ENCODE measurements at regions of chr12 and their contacts with region 1.

Region 1: GRCh38 chr12:14514154-14514842 is 53.4 kb downstream of the PLBD1 start:
- DNase-seq: peak; percentile 66 to 93
- H3K4me3 ChIP-seq: no peak overlapping the region
- H3K27ac ChIP-seq: no peak overlapping the region
- H3K4me1 ChIP-seq: peaks cover 18% of the 10 kb centered on the region
- H3K27me3 ChIP-seq: no peaks in the 10 kb centered on the region
- CTCF ChIP-seq: peak; percentile 79

Region 2: DNA sequence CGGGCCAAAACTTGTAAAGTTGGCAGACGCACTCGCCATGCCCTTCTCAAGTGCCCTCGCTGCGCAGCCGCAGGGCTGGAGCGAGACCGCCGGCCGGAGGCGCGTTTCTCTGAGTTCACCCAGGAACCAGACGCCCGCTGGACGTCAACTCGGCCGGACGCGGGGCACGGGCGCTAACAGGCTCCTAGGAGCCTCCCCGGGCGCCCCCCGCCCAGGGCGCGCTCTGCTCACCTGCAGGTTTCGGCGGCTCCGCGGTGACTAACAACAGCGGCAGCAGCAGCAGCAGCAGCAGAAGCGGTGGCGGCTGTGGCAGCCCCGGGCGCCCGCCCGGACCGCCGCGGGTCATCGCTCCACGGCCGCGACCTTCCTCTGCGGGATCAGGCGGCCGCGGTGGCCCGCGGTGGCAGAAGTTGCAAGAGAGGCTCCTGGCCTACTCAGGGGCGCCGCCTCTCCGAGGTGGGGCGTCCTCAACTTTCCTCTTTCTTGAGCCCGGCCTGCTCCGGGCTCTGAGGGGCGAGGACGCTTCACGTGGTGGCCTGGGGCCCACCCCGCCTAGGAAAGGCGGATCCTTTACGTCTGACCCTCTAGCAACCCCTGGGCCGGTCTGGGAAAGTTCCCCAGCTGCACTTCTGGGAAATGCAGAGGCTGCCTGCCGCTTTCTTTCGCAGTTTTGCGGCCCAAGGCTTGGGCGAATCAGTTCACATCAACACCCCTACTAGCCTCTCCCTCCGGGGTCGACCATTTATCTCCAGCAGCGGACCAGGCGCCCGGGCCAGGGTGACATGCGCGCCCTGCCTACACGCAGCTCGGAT is 53.3 kb after region 1 on chr12 and contains the start of gene PLBD1:
- CTCF ChIA-PET with region 1: interaction called, 3 read pairs
- POLR2A ChIA-PET with region 1: no interaction called
- intact Hi-C with region 1: loop called (anchors 1 kb)
- DNase-seq: peak; percentile 40 to 59
- H3K4me3 ChIP-seq: peak within 1 kb of the TSS; percentile 60
- H3K27ac ChIP-seq: no peak within 1 kb of the TSS
- H3K4me1 ChIP-seq: no peaks in the 10 kb centered on the region
- H3K27me3 ChIP-seq: no peaks in the 10 kb centered on the region
- CTCF ChIP-seq: no peak
- total RNA-seq, gene PLBD1: 13.8 and 17.8 TPM in 2 replicates

Region 3: DNA sequence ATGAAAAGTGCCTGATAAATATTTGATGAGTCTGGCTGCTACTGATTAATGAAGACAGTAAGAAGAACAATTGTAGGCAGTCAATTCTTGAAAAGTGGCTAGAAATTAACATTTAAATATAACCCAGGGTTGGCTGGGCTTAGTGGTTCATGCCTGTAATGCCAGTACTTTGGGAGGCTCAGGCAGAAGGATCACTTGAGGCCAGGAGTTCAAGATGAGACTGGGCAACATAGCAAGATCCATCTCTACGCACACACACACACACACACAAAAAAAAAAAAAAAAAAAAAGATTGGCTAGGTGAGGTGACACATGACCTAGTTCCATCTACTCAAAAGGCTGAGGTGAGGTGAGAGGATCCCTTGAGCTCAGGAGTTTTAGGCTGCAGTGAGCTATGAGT is 61.3 kb after region 1 on chr12:
- CTCF ChIA-PET with region 1: interaction called, 3 read pairs
- POLR2A ChIA-PET with region 1: interaction called, 16 read pairs
- intact Hi-C with region 1: no loop called
- DNase-seq: no peak
- H3K4me3 ChIP-seq: no peak overlapping the region
- H3K27ac ChIP-seq: no peak overlapping the region
- H3K4me1 ChIP-seq: no peaks in the 10 kb centered on the region
- H3K27me3 ChIP-seq: no peaks in the 10 kb centered on the region
- CTCF ChIP-seq: no peak

Region 4: DNA sequence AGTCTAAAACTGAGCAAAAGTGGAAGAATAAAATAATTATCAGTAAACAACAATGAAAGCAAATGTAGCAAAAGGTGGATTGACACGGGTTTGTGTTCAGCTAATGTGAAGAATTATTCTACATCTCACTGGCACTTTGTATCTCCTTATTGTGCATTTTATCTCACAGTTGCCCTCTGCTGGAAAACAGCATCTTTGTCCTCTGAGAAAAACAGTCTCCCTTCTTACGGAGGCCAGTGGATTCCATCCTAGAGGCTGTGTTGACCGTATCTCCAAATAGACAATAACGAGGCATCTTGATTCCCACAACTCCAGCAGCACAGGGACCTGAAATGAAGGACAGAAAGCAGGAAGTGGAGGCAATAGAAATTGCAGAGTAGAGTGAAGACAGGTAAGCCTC is 104.7 kb after region 1 on chr12:
- CTCF ChIA-PET with region 1: interaction called, 9 read pairs
- POLR2A ChIA-PET with region 1: no interaction called
- intact Hi-C with region 1: loop called (anchors 1 kb)
- DNase-seq: no peak
- H3K4me3 ChIP-seq: no peak overlapping the region
- H3K27ac ChIP-seq: no peak overlapping the region
- H3K4me1 ChIP-seq: no peaks in the 10 kb centered on the region
- H3K27me3 ChIP-seq: no peaks in the 10 kb centered on the region
- CTCF ChIP-seq: peak; percentile 56; the same call in 1 of the 2 replicates

Region 5: GRCh38 chr12:14629832-14630710 is 115.8 kb after region 1 on chr12:
- CTCF ChIA-PET with region 1: no interaction called
- POLR2A ChIA-PET with region 1: no interaction called
- intact Hi-C with region 1: loop called (anchors 1 kb)
- DNase-seq: peak; percentile 51 to 75
- H3K4me3 ChIP-seq: no peak overlapping the region
- H3K27ac ChIP-seq: no peak overlapping the region
- H3K4me1 ChIP-seq: no peaks in the 10 kb centered on the region
- H3K27me3 ChIP-seq: no peaks in the 10 kb centered on the region
- CTCF ChIP-seq: peak; percentile 94

Region 6: DNA sequence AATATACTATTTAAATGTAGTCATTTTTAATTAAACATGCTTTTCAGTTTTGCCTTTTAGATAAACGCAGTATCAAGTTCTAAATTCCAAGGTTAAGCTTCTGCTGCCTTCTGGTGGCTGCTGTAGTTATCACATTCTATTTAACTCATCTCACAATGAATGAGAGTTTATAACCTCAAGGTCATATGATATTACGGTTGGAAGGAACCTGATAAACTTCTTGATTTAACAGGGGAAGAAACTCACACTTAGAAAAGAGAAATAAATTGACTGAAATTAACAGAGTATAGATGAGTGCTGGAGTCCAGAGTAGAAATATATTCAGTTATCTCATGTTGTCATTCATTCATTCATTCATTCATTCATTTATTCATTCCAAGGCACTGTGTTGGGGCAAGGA is 150.2 kb after region 1 on chr12:
- CTCF ChIA-PET with region 1: no interaction called
- POLR2A ChIA-PET with region 1: no interaction called
- intact Hi-C with region 1: loop called (anchors 1 kb)
- DNase-seq: peak; percentile 37 to 45
- H3K4me3 ChIP-seq: no peak overlapping the region
- H3K27ac ChIP-seq: no peak overlapping the region
- H3K4me1 ChIP-seq: no peaks in the 10 kb centered on the region
- H3K27me3 ChIP-seq: no peaks in the 10 kb centered on the region
- CTCF ChIP-seq: peak; percentile 79

Region 7: GRCh38 chr12:14784471-14784870 is 270.2 kb after region 1 on chr12:
- CTCF ChIA-PET with region 1: no interaction called
- POLR2A ChIA-PET with region 1: interaction called, 16 read pairs
- intact Hi-C with region 1: no loop called
- DNase-seq: no peak
- H3K4me3 ChIP-seq: no peak overlapping the region
- H3K27ac ChIP-seq: no peak overlapping the region
- H3K4me1 ChIP-seq: no peaks in the 10 kb centered on the region
- H3K27me3 ChIP-seq: no peaks in the 10 kb centered on the region
- CTCF ChIP-seq: no peak

Region 8: GRCh38 chr12:14828896-14829295 is 314.6 kb after region 1 on chr12:
- CTCF ChIA-PET with region 1: no interaction called
- POLR2A ChIA-PET with region 1: no interaction called
- intact Hi-C with region 1: no loop called
- DNase-seq: no peak
- H3K4me3 ChIP-seq: no peak overlapping the region
- H3K27ac ChIP-seq: no peak overlapping the region
- H3K4me1 ChIP-seq: no peaks in the 10 kb centered on the region
- H3K27me3 ChIP-seq: no peaks in the 10 kb centered on the region
- CTCF ChIP-seq: no peak